ENCODE measurements at regions of chr2 and their contacts with region 1.

Region 1: GRCh38 chr2:177332041-177332991 is 60.3 kb upstream of the AGPS start:
- DNase-seq: peak in 4 of 10 donors; percentile 15 to 82 (median 58)

Region 2: DNA sequence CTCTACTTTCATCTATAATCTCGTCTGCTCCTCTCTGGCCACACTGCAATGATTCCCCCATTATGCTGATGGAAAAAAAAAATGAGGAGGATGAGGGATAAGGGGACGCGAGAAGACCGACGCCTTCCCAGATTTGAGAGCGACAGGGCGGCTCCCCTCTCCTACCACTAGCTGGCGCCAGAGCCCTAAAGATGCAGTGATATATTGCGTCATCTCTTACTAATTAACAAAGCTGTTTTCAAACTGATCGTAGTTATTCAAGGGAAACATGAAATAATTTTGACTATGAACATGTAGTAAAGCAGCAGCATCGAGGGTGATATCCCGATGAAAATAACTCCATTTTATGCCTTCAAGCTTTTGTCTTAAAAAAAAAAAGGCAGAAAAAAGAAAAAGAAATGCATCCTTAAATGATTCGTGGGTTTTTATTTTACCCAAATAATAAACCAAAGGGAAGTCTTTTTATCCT is 167.7 kb before region 1 on chr2:
- intact Hi-C with region 1: loop called (anchors 1 kb)
- DNase-seq: peak; percentile 80 to 98 (median 88)

Region 3: GRCh38 chr2:177263451-177264208 is 68.7 kb before region 1 on chr2:
- intact Hi-C with region 1: loop called (anchors 2 kb)
- DNase-seq: peak; percentile 92 to 99 (median 96)

Region 4: GRCh38 chr2:177419274-177419673 is 87.0 kb after region 1 on chr2:
- intact Hi-C with region 1: loop called (anchors 1 kb)
- DNase-seq: no peak

Region 5: GRCh38 chr2:177604271-177605065 is 272.2 kb after region 1 on chr2:
- intact Hi-C with region 1: loop called (anchors 5 kb)
- DNase-seq: no peak

Region 6: DNA sequence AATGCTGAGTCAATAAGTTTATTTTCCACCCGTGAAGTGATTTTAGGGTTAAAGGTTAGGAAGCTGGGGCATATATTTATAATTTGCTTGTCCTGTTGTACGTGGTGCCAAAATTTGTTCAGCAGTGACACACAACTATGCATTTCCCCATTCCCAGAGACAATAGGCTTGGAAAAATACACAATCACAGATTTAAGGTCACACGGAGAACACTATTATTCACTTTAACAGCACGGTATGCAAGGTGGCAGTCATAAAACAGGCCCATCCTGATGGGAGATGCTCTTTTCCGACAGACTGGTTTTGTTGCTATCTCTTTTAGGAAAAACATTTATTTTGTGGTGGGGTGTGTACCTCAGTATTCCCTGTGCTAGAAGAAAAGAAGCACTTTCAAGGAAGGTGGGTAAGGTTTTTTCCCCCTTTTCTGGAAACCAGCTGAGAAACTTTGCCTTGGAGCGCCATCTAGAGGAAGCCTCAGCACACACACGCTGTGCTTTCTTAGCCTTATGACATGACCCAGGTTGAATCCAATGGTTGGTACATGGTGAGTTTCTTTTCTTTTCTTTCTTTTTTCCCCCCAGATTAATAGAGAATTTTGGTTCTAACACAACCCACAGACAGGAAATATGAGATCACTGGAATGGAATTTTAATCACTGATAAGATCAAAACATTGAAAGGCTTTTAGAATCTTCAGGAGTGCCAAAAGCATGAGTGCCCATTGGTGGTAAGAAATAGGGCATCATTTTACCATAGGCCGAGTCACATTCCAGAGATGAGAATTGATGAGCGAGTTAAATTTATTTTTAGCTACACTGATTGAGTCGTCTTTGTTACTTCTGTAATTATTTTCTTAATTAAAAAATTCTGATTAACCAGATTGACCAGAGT is 392.3 kb after region 1 on chr2:
- intact Hi-C with region 1: loop called (anchors 2 kb)
- DNase-seq: peak; percentile 37 to 92 (median 70)

Region 7: DNA sequence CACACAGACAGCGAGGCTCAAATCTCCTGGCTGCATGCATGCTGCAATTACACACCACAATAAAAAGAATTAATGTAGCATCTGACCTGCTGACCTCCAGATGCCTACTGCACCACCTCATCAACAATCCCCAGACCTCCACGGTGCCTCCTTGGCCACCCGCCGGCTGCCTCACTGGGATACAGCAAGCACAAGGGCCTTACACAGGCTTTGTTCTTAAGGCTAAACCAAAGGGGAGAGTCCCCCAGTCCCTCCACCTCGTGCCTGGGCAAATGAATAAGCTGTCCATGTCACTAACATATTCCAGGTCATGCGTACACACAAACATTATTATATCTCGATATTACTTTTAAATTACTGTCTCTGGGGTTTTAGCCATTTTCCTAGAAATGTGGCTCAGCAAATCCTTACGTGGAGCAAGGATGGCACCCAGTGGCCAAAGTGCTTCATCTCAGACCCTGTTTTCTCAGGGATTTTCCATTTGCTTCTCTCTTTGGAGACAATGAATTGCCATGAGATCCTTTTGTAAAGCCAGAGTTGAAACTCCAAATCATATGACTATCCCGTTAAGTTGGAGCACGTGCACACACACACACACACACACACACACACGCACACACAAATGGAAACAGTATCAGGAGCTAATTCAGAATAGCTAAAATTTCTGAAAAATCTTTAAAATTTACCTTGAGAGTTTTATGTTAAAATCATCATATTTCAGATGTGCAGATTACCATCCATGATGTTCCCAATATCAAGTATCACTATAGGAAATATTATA is 426.5 kb after region 1 on chr2:
- intact Hi-C with region 1: loop called (anchors 10 kb)
- DNase-seq: peak in 9 of 10 donors; percentile 17 to 92 (median 59)

Measured in posterior cingulate gyrus (tissue), 11 donors.